Activated CD4-positive, alpha-beta T cell treated with anti-CD3 and anti-CD28 coated beads for 36 hours (primary cell): ENCODE measurements at regions of chr7 and their contacts with region 1.

Region 1: GRCh38 chr7:42886129-42886528 is 25.7 kb downstream of the C7orf25 start:
- DNase-seq: no peak
- ATAC-seq: no peak
- H3K4me3 Mint-ChIP-seq: no peak overlapping the region
- H3K27ac Mint-ChIP-seq: no peak overlapping the region
- H3K4me1 Mint-ChIP-seq: peaks cover 19% of the 10 kb centered on the region
- H3K27me3 Mint-ChIP-seq: peaks cover 2% of the 10 kb centered on the region

Region 2: DNA sequence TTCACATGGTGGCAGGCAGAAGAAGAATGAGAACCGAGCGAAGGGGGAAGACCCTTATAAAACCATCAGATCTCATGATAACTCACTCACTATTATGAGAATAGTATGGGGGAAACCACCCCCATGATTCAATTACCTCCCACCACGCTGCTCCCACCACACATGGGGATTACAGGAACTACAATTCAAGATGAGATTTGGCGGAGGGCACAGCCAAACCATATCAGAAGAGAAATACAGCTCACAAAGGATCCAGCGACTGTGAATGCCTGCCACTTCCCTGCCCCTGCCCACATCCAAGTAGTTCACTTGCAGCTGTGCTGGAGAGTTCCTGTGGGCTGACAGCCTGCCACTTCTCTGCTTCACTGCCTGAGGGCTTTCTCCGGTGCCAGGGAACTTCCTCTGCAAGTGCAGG is 123.0 kb before region 1 on chr7:
- CTCF ChIA-PET with region 1: no interaction called
- POLR2A ChIA-PET with region 1: no interaction called
- intact Hi-C with region 1: no loop called
- DNase-seq: peak; percentile 9
- ATAC-seq: peak; percentile 12
- H3K4me3 Mint-ChIP-seq: no peak overlapping the region
- H3K27ac Mint-ChIP-seq: no peak overlapping the region
- H3K4me1 Mint-ChIP-seq: no peaks in the 10 kb centered on the region
- H3K27me3 Mint-ChIP-seq: peaks cover 28% of the 10 kb centered on the region

Region 3: GRCh38 chr7:42906181-42906580 is 20.1 kb after region 1 on chr7:
- CTCF ChIA-PET with region 1: interaction called, 3 read pairs
- POLR2A ChIA-PET with region 1: interaction called, 13 read pairs
- intact Hi-C with region 1: loop called in 1 of 2 experiments (anchors 2 kb)
- DNase-seq: no peak
- ATAC-seq: no peak
- H3K4me3 Mint-ChIP-seq: no peak overlapping the region
- H3K27ac Mint-ChIP-seq: no peak overlapping the region
- H3K4me1 Mint-ChIP-seq: peaks cover 23% of the 10 kb centered on the region
- H3K27me3 Mint-ChIP-seq: no peaks in the 10 kb centered on the region